Endothelial cell of umbilical vein (primary cell): ENCODE measurements at regions of chr22 and their contacts with region 1.

Region 1: GRCh38 chr22:24706054-24706453 is 68.5 kb downstream of the PIWIL3 start:
- DNase-seq: peak; percentile 40
- H3K4me3 ChIP-seq: no peak overlapping the region
- H3K27ac ChIP-seq: no peak overlapping the region
- H3K4me1 ChIP-seq: no peaks in the 10 kb centered on the region
- H3K27me3 ChIP-seq: peaks cover 7 to 8% of the 10 kb centered on the region in 2 experiments
- CTCF ChIP-seq: peak; percentile 38 to 62
- POLR2A ChIP-seq: no peak

Region 2: GRCh38 chr22:24695561-24696511 is 10.2 kb before region 1 on chr22:
- CTCF ChIA-PET with region 1: interaction called, 12 read pairs
- POLR2A ChIA-PET with region 1: no interaction called
- dilution Hi-C with region 1: no loop called
- intact Hi-C with region 1: no loop called
- DNase-seq: no peak
- H3K4me3 ChIP-seq: no peak overlapping the region
- H3K27ac ChIP-seq: no peak overlapping the region
- H3K4me1 ChIP-seq: peaks cover 7% of the 10 kb centered on the region
- H3K27me3 ChIP-seq: no peaks in the 10 kb centered on the region
- CTCF ChIP-seq: no peak
- POLR2A ChIP-seq: no peak

Region 3: DNA sequence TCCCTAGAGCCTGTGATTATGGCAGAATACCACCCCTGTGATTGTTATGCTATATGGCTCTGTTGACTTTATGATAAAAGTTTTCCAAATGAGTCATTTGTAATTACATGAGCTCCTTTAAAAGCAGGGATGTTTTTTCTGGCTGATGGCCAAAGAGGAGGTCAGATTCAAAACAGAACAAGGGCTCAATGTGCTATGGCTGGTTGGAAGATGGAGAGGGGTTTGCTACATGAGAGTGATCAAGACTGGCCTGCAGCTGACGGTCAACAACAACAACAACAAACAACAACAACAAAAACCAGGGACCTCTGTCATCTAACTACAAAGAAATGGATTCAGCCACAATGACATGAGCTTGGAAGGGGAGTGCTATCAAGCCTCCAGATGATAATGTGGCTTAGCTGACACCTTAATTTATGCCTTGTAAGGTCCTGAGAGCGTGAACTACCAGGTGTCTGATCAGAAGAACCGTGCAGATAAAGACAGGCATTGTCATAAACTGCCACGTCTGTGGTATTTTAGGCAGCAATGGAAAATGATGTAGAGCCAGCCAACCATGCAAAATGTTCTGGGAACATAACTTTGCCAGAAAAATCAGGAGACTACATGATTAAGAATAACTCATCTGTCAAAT is 21.3 kb after region 1 on chr22:
- CTCF ChIA-PET with region 1: interaction called, 11 read pairs
- POLR2A ChIA-PET with region 1: no interaction called
- dilution Hi-C with region 1: no loop called
- intact Hi-C with region 1: no loop called
- DNase-seq: peak; percentile 98
- H3K4me3 ChIP-seq: no peak overlapping the region
- H3K27ac ChIP-seq: peak overlapping the region; percentile 27
- H3K4me1 ChIP-seq: peaks cover 42% of the 10 kb centered on the region
- H3K27me3 ChIP-seq: peaks cover 3 to 6% of the 10 kb centered on the region in 2 experiments
- CTCF ChIP-seq: no peak
- POLR2A ChIP-seq: no peak

Region 4: DNA sequence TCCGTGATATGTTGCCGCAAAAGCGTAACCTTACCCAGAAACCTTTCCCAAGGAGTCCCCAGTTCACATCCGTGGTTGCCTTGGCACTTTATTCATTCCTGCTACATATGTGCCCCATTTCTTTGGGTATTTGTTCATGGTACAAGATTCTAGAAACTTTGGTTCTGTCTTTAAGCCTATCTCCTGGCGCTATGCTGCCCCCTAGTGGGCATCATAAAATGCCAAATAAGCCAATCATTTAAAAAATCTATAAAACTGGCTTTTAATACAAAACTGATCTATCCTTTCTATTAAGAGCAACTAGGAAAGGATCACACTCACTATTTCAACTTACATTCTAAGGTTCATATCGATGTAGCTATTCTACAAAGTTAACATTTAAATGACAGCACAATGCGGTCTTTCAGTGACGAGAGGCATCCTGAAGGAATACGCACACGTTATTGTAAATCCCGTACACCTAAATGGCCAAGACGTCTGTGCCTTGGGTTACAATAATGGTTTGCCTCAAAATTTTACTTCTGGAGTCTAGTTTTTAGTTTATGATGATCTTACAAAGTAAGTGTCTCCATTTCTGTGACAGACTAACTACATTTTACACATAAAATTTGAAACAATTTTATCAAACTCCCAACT is 52.2 kb after region 1 on chr22:
- CTCF ChIA-PET with region 1: interaction called, 75 read pairs
- POLR2A ChIA-PET with region 1: no interaction called
- dilution Hi-C with region 1: no loop called
- intact Hi-C with region 1: loop called (anchors 1 kb)
- DNase-seq: peak; percentile 70
- H3K4me3 ChIP-seq: no peak overlapping the region
- H3K27ac ChIP-seq: no peak overlapping the region
- H3K4me1 ChIP-seq: peaks cover 25% of the 10 kb centered on the region
- H3K27me3 ChIP-seq: peaks cover 2 to 7% of the 10 kb centered on the region in 2 experiments
- CTCF ChIP-seq: peak; percentile 60 to 70
- POLR2A ChIP-seq: no peak